CD4-positive, alpha-beta memory T cell (primary cell): ENCODE measurements at regions of chr1 and their contacts with region 1.

Region 1: DNA sequence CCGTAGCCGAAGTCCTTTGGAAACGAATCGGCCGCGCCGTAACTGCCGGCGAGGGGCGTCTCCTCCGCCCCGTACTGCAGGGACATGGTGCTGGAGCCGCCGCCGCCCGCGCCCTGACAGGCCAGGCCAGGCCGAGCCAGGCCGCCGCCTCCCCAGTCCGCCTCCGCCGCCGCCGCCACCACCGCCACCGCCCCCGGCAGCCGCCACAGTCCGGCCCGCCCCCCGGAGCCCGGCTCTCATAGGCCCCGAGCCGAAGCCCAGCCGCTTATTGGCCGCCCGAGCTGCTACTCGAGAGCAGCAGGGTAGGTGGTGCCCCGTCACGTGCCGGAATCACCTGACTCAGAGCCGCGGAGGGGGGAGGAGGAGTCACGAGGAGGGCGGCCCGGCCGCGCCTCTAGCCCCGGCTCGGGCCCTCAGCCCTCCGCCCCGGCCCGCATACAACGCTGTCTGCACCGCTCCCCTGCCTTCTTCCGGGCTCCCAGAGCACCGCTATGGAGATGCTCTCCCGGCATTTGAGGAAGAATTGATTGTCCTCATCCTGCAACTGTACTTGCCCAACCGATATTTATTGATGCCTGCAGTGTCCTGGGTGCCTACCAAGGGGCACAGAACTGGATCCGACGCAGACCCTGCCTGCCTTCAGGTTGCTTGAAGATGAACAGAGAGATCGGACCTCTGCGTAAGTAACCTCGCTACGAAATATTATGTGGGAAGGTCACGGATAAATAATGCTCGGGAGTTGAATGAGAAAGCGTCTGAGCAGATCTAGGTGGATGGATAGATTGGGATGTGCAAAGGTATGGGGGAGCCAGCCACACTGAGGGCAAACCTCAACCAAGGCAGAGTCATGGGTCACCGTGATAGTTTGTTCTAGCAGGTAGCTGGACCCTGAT is at the start of gene RRAGC:
- DNase-seq: peak; percentile 97 to 99 (median 97)
- H3K4me3 ChIP-seq: peak within 1 kb of the TSS; percentile 70 to 92
- H3K4me3 Mint-ChIP-seq: peak within 1 kb of the TSS; percentile 91 to 97 (median 96)
- H3K27ac ChIP-seq: peak within 1 kb of the TSS; percentile 65
- H3K27ac Mint-ChIP-seq: peak within 1 kb of the TSS; percentile 88 to 98 (median 94)
- H3K4me1 ChIP-seq: peaks cover 35% of the 10 kb centered on the region
- H3K4me1 Mint-ChIP-seq: peaks cover 37 to 77% (median 57%) of the 10 kb centered on the region in 4 donors
- H3K27me3 ChIP-seq: no peaks in the 10 kb centered on the region
- H3K27me3 Mint-ChIP-seq: no peaks in the 10 kb centered on the region
- total RNA-seq, gene RRAGC: 24.5 to 25.2 TPM

Region 2: DNA sequence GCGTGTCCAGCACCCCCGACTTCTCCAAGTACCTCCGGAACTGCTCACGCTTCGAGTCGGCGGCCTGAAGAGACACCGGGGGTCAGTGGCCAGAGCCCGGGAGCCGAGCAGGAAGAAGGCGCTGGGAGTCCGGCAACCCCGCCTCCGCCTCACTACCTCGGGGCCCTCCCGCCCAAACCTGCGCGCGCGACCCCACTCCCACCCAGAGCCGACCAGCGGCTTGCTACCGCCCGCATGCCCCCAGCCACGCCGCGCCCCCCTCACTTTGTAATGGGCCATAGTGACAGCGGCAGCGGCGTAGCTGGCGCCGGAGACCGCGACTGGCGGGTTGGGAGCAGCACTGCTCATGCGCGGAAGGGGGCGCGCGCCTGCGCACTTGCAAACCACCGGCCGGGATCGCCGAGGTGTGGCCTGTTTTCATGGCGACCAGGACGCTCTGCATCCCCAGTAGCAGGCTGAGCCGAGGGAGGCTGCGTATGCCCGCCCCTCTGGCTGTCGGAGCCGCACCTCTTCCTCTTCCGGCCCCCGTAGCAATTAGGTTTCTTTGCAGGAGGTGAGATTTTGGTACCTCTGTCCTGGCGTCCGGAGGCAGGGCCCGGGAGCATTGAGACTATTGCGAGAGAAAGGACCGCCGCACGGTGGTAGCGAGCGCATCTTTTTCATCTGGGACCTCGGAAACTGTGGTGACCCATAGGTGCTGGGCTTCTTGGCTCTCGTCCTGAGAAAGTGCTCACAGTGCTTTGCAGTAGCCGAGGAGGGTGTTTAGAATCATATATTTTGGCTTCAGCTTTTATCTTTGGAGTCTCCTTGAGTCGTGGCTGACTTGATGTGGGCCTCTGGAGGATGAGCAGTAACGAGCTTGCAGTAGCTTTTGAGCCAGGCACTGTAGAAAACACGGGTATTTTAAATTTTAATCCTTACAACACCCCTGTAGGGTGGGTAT is 13.5 kb after region 1 on chr1 and contains the start of gene MYCBP:
- CTCF ChIA-PET with region 1: interaction called, 3 read pairs
- POLR2A ChIA-PET with region 1: interaction called, 28 read pairs
- intact Hi-C with region 1: loop called (anchors 1 kb)
- DNase-seq: peak; percentile 96 to 99 (median 98)
- H3K4me3 ChIP-seq: peak within 1 kb of the TSS; percentile 77 to 81
- H3K4me3 Mint-ChIP-seq: peak within 1 kb of the TSS; percentile 88 to 95 (median 92)
- H3K27ac ChIP-seq: peak within 1 kb of the TSS; percentile 79
- H3K27ac Mint-ChIP-seq: peak within 1 kb of the TSS; percentile 88 to 94 (median 93)
- H3K4me1 ChIP-seq: peaks cover 35% of the 10 kb centered on the region
- H3K4me1 Mint-ChIP-seq: peaks cover 16 to 34% (median 25%) of the 10 kb centered on the region in 4 donors
- H3K27me3 ChIP-seq: no peaks in the 10 kb centered on the region
- H3K27me3 Mint-ChIP-seq: no peaks in the 10 kb centered on the region
- total RNA-seq, gene MYCBP: 13.4 to 15.4 TPM

Region 3: DNA sequence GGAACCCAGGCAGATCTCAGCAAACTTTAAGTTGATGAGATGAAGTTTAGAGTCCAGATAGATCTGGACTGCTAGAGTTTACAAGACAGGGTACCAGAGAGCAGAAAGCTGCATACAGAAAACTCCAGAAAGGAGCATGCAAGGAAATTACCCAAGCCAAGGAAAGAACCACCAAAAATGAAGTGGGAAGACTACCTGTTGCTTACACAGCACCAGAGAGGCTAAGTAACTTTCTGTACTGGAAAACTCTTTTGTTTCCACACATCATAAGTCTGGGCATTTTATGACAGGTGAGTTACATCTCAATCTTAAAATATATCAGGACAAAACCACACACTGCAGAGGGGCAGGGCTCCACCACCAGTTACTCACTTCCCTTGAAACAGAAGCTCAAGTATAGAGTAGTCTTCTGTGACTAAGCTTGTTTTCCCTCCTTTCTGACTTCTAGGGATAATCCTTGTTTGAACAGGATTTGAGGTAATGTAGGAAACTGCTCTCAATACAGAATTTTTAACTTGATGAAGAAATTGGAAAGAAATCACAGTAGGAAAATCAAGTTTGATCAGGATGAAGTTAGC is 38.9 kb after region 1 on chr1:
- CTCF ChIA-PET with region 1: no interaction called
- POLR2A ChIA-PET with region 1: no interaction called
- intact Hi-C with region 1: no loop called
- DNase-seq: no peak
- H3K4me3 ChIP-seq: no peak overlapping the region
- H3K4me3 Mint-ChIP-seq: no peak overlapping the region
- H3K27ac ChIP-seq: no peak overlapping the region
- H3K27ac Mint-ChIP-seq: no peak overlapping the region
- H3K4me1 ChIP-seq: no peaks in the 10 kb centered on the region
- H3K4me1 Mint-ChIP-seq: no peaks in the 10 kb centered on the region
- H3K27me3 ChIP-seq: no peaks in the 10 kb centered on the region
- H3K27me3 Mint-ChIP-seq: no peaks in the 10 kb centered on the region

Region 4: GRCh38 chr1:38990738-38991639 is 131.2 kb after region 1 on chr1 and contains the start of gene AKIRIN1:
- CTCF ChIA-PET with region 1: no interaction called
- POLR2A ChIA-PET with region 1: interaction called, 3 read pairs
- intact Hi-C with region 1: loop called (anchors 2 kb)
- DNase-seq: peak; percentile 87 to 95 (median 89)
- H3K4me3 ChIP-seq: peak within 1 kb of the TSS; percentile 52 to 67
- H3K4me3 Mint-ChIP-seq: peak within 1 kb of the TSS; percentile 88 to 94 (median 92)
- H3K27ac ChIP-seq: peak within 1 kb of the TSS; percentile 93
- H3K27ac Mint-ChIP-seq: peak within 1 kb of the TSS; percentile 87 to 93 (median 91)
- H3K4me1 ChIP-seq: peaks cover 47% of the 10 kb centered on the region
- H3K4me1 Mint-ChIP-seq: peaks cover 21 to 52% (median 37%) of the 10 kb centered on the region in 4 donors
- H3K27me3 ChIP-seq: no peaks in the 10 kb centered on the region
- H3K27me3 Mint-ChIP-seq: no peaks in the 10 kb centered on the region
- total RNA-seq, gene AKIRIN1: 79.6 to 84.9 TPM